Heart left ventricle (tissue), 16 donors: ENCODE measurements at regions of chr1 and their contacts with region 1.

Region 1: DNA sequence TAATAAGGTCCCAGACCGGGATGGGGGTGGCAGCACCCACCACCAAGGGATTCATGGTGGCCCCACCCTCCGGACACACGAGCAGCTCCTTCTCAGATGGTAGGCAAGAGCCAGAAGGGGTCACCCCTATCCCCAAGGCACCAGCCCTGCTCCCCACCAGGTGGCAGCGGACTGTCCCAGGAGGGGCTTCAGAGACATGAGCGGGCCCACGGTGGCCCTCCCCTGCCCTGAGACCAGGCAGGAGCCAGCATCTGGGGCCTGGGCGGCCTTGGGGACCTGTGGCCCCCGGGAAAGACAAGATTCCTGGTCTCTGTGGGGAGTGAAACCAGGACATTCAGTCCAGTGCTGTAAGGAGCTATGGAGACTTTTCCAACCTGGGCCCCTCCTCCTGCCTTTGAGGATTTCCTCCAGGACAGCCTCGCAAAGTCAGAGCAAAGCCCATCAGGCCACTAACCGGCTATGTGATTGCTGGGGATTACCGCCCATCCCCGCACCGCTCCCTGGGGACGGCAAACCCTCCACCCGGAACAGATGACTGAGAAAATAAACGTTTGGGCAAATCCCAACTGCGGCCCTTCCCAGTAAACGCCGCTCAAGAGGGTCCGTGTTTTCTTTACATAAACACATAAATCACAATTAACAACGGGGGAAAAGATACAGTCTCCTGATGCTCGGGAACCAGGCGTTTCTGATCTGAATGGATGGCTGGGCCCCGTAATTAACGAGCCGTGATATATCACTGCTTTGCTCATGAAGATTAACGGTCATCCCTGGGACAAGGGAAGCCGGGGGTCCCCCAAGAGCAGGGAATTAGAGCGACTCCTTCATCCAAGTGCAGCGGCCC is 50.9 kb upstream of the ARHGEF16 start:
- DNase-seq: no peak
- ATAC-seq: no peak
- H3K4me3 ChIP-seq: no peak overlapping the region
- H3K27ac ChIP-seq: no peak overlapping the region
- H3K4me1 ChIP-seq: peaks cover 0 to 20% (median 5%) of the 10 kb centered on the region in 12 donors
- H3K27me3 ChIP-seq: no peaks in the 10 kb centered on the region
- CTCF ChIP-seq: peak in 4 of 12 donors; percentile 8 to 21 (median 16)
- POLR2A ChIP-seq: no peak

Region 2: DNA sequence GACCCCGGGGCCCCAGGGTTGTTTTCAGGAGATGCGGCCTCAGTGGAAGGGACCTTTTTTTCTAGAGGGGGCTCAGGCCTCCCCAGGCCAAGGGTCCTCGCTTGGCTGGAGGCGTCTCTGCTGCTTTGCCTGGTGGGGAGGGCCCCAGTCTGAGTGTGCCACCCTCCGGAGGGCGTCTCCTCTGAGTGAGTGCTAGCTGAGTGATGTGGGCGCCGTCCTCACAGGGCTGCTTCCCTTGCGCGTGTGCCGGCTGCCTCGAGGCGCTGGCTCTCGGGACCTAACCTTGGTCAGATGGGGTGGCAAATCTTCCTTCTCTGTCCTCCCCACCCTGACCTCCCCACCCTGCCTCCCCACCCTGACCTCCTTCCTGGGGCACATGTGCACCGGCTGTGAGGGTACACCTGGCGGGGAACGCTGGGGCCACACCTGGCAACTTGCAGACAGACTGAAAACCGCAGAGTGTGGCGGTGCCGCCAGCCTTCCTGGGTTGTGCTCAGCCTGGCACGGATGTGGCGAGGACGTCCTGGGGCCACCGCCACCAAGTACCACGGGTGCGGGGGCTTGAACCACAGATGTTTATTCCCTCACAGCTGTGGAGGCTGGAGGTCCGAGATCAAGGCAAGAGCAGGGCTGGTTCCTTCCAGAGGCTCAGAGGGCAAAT is 509.1 kb before region 1 on chr1:
- intact Hi-C with region 1: no loop called
- DNase-seq: no peak
- ATAC-seq: no peak
- H3K4me3 ChIP-seq: no peak overlapping the region
- H3K27ac ChIP-seq: no peak overlapping the region
- H3K4me1 ChIP-seq: no peaks in the 10 kb centered on the region
- H3K27me3 ChIP-seq: peaks cover 0 to 23% (median 0%) of the 10 kb centered on the region in 9 donors
- CTCF ChIP-seq: no peak
- POLR2A ChIP-seq: no peak

Region 3: DNA sequence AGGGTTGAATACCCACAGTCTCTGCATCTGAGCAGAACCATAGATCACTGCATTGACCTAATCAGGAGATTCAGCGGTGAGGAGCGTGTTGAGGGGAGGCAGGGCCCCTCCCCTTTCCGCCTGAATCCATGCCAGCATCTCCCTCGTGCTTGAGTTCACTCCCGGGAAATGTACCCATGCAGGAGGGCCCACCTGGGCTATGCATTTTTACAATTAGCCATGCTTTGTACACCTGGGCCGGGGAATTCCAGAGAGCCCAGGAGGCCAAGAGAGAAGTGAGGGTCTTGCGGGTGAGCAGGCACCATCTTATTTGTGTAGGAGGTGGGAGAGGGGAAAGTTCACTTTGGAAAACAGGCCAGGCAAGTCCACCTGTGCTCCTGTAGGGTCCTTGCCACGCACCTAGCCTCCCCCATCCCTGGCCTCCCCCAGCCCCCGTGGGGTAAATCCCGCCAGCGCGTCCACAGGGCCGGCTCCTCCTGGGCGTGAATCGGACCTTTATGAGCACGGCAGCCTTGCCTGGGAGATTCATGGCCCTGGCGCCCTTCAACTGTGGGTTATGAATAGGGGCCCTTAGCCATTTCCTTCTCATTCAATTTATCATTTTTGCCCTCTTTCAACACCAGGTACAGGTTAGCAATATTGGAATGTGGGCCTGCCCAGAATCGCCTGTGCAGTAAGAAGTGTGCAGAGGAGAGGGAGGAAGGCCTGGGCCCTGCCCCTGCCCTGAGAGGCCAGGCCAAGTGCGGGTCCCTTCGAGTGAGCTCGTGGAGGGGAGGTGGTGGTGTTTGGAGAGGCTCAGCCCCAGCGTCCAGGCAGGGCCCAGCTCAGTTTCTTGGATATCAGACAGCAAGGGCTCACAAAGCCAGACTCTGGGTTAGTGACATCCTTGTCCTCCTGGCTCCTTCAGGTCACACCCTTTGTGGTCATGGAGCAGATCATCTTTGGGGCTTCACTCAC is 466.8 kb before region 1 on chr1:
- intact Hi-C with region 1: no loop called
- DNase-seq: peak in 2 of 5 donors; percentile 12 to 32
- ATAC-seq: no peak
- H3K4me3 ChIP-seq: no peak overlapping the region
- H3K27ac ChIP-seq: no peak overlapping the region
- H3K4me1 ChIP-seq: no peaks in the 10 kb centered on the region
- H3K27me3 ChIP-seq: peaks cover 0 to 19% (median 0%) of the 10 kb centered on the region in 9 donors
- CTCF ChIP-seq: no peak
- POLR2A ChIP-seq: no peak

Region 4: GRCh38 chr1:3012456-3013291 is 390.9 kb before region 1 on chr1:
- intact Hi-C with region 1: loop called in 1 of 10 experiments (anchors 5 kb)
- DNase-seq: peak; percentile 35 to 81 (median 42)
- ATAC-seq: peak in 3 of 4 donors; percentile 74 to 88 (median 79)
- H3K4me3 ChIP-seq: no peak overlapping the region
- H3K27ac ChIP-seq: no peak overlapping the region
- H3K4me1 ChIP-seq: peaks cover 0 to 7% (median 0%) of the 10 kb centered on the region in 12 donors
- H3K27me3 ChIP-seq: peaks cover 0 to 41% (median 6%) of the 10 kb centered on the region in 9 donors
- CTCF ChIP-seq: peak; percentile 74 to 96 (median 80)
- POLR2A ChIP-seq: no peak

Region 5: DNA sequence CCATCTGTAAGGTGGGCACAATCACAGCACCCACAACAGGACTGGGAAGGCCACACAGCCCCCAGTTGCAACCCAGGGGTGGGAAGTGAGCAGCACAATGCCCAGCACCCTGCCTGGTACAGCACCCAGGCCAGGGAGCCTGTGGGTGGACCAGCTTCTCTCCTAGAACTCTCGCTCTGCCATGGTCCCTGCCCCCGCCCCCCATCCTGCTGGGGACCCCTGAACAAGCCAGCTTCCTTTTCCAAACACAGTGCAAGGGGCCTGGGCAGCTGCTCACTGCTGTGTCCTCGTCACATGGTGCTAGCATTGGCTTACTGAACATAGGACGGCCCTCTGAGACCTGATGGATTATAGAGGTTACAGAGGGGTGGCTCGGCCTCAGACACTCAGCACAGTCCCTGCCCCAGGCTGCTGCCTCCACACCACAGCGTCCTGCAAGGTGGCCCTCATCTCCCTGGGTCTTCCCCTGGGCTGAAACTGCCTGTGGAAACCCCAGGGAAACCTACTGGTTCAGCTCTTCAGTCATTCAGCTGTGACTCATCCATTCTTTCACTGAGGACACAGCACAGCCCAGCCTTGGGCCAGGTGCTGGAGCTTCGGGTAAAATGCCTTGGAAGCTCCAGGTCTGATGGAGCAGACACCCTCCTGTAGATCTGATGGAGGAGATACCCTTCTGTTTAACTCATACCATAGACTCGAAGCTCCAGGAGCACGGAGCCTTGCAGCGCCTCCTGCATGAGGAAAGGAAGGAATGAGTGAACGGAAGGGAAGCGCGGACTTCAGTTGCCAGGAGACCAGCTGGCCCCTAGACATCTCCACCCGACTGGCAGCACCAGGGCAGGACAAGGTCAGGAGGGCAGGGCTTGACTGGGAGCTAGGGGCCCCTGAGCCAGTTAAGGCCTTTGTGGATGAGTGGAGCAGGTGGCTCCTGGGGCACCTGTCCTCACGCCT is 342.7 kb before region 1 on chr1:
- intact Hi-C with region 1: loop called in 2 of 10 experiments (anchors 5 to 10 kb)
- DNase-seq: peak in 1 of 5 donors; percentile 40
- ATAC-seq: no peak
- H3K4me3 ChIP-seq: no peak overlapping the region
- H3K27ac ChIP-seq: no peak overlapping the region
- H3K4me1 ChIP-seq: peaks cover 0 to 34% (median 8%) of the 10 kb centered on the region in 12 donors
- H3K27me3 ChIP-seq: peaks cover 7 to 42% (median 24%) of the 10 kb centered on the region in 9 donors
- CTCF ChIP-seq: no peak
- POLR2A ChIP-seq: no peak

Region 6: DNA sequence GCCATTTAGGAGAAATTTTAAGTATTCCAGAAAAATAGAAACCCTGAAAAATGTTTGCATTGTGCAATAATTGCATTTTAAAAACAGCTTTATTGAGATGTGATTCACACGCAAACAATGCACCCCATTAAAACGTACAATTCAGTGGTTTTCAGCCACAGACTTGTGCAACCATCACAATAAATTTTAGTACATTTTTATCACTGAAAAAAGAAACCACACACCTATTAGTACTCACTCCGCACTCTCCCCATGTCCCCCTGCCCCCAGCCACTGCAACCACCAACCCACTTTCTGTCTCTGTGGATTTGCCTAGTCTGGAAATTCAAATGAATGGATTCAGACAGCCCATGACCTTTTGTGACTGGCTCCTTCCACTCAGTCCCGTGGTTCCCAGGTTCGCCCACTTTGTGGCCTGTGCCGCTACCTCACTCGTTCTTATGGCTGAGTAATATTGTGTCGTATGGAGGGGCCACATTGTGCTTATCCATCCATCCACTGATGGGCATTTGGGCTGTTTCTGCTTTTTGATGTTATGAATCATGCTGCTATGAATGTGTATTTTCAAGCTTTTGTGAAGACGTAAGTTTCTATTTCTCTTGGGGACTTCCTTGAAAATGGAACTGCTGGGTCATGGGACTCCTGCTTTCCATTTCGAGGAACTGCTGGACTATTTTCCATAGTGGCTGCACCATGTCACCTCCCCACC is 96.9 kb before region 1 on chr1:
- intact Hi-C with region 1: loop called in 1 of 10 experiments (anchors 10 kb)
- DNase-seq: no peak
- ATAC-seq: no peak
- H3K4me3 ChIP-seq: no peak overlapping the region
- H3K27ac ChIP-seq: peak overlapping the region in 2 of 12 donors; percentile 5 to 52
- H3K4me1 ChIP-seq: peaks cover 0 to 55% (median 15%) of the 10 kb centered on the region in 12 donors
- H3K27me3 ChIP-seq: peaks cover 0 to 4% (median 0%) of the 10 kb centered on the region in 9 donors
- CTCF ChIP-seq: no peak
- POLR2A ChIP-seq: no peak

Region 7: DNA sequence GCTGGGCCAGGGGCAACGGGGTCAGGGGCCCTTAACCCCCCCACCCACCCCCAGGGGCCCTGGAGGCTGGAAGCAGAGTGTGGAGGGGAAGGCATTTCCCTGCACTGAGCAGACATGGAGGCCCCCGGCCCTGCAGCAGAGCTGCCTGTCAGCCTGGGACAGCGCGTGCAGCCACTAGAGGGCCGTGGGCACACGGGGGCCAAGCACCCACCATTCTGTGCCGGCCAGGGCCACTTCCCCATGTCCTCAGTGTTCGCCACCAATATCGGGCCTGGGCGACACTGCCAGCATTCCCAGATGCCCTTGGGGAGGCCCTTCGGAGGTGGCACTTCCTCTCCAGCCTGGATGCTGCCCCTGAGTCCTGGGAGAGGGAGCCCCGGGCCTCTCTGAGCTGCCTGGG is 27.7 kb after region 1 on chr1:
- intact Hi-C with region 1: loop called in 1 of 10 experiments (anchors 2 kb)
- DNase-seq: peak in 2 of 5 donors; percentile 14 to 43
- ATAC-seq: no peak
- H3K4me3 ChIP-seq: no peak overlapping the region
- H3K27ac ChIP-seq: no peak overlapping the region
- H3K4me1 ChIP-seq: no peaks in the 10 kb centered on the region
- H3K27me3 ChIP-seq: no peaks in the 10 kb centered on the region
- CTCF ChIP-seq: no peak
- POLR2A ChIP-seq: no peak